ENCODE measurements at regions of chrX and their contacts with region 1.

Region 1: GRCh38 chrX:120790118-120790517 is 85.5 kb downstream of the CT47B1 start:
- DNase-seq: peak in 19 of 35 experiments; percentile 0 to 72 (median 8)
- ATAC-seq: peak; percentile 67 to 77 (median 73)
- H3K4me3 ChIP-seq: no peak overlapping the region
- H3K4me3 Mint-ChIP-seq: peak overlapping the region in 2 of 3 donors; percentile 2 to 15
- H3K27ac ChIP-seq: no peak overlapping the region
- H3K27ac Mint-ChIP-seq: peak overlapping the region; percentile 45 to 79
- H3K4me1 ChIP-seq: no peaks in the 10 kb centered on the region
- H3K4me1 Mint-ChIP-seq: peaks cover 14 to 21% (median 21%) of the 10 kb centered on the region in 3 donors
- H3K27me3 ChIP-seq: no peaks in the 10 kb centered on the region
- H3K27me3 Mint-ChIP-seq: peaks cover 0 to 14% of the 10 kb centered on the region in 2 donors

Region 2: DNA sequence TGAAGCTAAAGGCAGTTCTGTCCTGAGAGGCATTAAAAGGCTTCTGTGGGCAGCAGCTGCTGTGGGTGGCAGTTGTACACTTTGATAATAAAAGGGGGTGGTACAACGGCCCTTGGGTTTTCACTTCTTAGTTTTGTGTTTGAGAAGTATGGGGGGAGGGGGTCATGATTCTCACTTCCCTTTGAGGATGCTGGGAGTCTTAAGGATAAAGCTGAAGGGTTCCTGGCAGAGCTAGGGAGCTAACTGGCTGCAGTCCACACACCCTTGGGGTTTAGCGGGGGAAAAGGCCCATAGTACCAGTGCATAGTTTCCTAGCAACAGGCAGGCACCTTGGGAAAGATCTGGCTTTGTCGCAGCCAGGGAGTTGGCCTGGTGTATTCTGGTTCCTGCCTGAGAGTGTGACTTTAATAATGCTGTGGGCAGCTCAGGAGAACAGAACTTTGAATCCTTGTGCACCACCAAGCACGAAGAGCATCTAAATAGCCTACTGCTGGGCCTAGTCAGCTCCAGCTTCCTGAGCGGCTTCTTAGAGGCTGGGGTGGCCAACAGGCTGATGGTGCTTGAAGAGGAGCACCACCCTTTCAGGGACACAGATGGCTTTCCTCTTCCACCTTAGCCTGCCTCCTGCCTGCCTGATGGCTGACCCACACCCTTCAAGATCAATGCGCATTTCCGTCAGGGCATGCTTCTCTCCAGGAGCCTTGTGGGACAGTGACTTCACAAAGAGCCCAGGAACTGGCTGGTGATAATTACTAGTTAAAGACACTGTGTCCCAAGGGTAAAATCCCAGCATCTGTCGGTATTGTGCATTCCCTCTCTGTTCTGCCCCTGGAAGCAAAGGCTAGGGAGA is 527.0 kb before region 1 on chrX:
- CTCF ChIA-PET with region 1: no interaction called
- POLR2A ChIA-PET with region 1: no interaction called
- DNase-seq: no peak
- ATAC-seq: no peak
- H3K4me3 ChIP-seq: no peak overlapping the region
- H3K4me3 Mint-ChIP-seq: no peak overlapping the region
- H3K27ac ChIP-seq: no peak overlapping the region
- H3K27ac Mint-ChIP-seq: no peak overlapping the region
- H3K4me1 ChIP-seq: no peaks in the 10 kb centered on the region
- H3K4me1 Mint-ChIP-seq: peaks cover 0 to 2% (median 0%) of the 10 kb centered on the region in 3 donors
- H3K27me3 ChIP-seq: no peaks in the 10 kb centered on the region
- H3K27me3 Mint-ChIP-seq: peaks cover 0 to 12% of the 10 kb centered on the region in 2 donors

Region 3: GRCh38 chrX:120761810-120762209 is 28.3 kb before region 1 on chrX:
- CTCF ChIA-PET with region 1: no interaction called
- POLR2A ChIA-PET with region 1: interaction called, 6 to 11 read pairs
- DNase-seq: no peak
- ATAC-seq: no peak
- H3K4me3 ChIP-seq: no peak overlapping the region
- H3K4me3 Mint-ChIP-seq: no peak overlapping the region
- H3K27ac ChIP-seq: no peak overlapping the region
- H3K27ac Mint-ChIP-seq: no peak overlapping the region
- H3K4me1 ChIP-seq: no peaks in the 10 kb centered on the region
- H3K4me1 Mint-ChIP-seq: peaks cover 5% of the 10 kb centered on the region in 3 donors
- H3K27me3 ChIP-seq: no peaks in the 10 kb centered on the region
- H3K27me3 Mint-ChIP-seq: peaks cover 0 to 8% of the 10 kb centered on the region in 2 donors

Region 4: DNA sequence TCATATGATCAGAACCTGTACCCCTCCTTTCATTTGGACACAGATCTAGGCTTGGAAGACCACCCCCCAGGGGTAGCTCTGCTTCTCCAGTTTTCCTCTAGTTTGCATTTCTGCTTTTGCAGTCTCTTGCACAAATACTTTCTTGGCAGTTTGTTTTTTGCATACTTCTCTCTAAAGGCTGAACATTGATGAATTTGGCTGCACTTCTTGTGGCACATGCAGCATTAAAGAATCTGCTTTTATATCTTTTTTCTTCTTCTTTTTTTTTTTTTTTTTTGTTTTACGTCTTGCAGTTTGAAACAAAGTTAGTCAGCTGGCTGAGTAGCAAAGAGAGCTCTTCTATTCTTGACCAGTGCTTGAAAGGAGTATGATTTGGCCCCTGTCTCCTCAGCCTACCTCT is 530.3 kb after region 1 on chrX:
- CTCF ChIA-PET with region 1: no interaction called
- POLR2A ChIA-PET with region 1: interaction called in 1 of 2 experiments, 13 read pairs
- DNase-seq: no peak
- ATAC-seq: no peak
- H3K4me3 ChIP-seq: no peak overlapping the region
- H3K4me3 Mint-ChIP-seq: no peak overlapping the region
- H3K27ac ChIP-seq: no peak overlapping the region
- H3K27ac Mint-ChIP-seq: no peak overlapping the region
- H3K4me1 ChIP-seq: no peaks in the 10 kb centered on the region
- H3K4me1 Mint-ChIP-seq: no peaks in the 10 kb centered on the region
- H3K27me3 ChIP-seq: no peaks in the 10 kb centered on the region
- H3K27me3 Mint-ChIP-seq: peaks cover 0 to 12% of the 10 kb centered on the region in 2 donors

Measured in T-cell (primary cell).